ENCODE measurements at regions of chr5 and their contacts with region 1.

Region 1: GRCh38 chr5:149960272-149961185 is at the start of gene SLC26A2:
- DNase-seq: peak; percentile 93
- H3K4me3 ChIP-seq: peak within 1 kb of the TSS; percentile 75
- H3K27ac ChIP-seq: peak within 1 kb of the TSS; percentile 90
- H3K27me3 ChIP-seq: no peaks in the 10 kb centered on the region
- CTCF ChIP-seq: no peak
- polyA plus RNA-seq, gene SLC26A2: 6.6 and 9.7 TPM in 2 replicates

Region 2: DNA sequence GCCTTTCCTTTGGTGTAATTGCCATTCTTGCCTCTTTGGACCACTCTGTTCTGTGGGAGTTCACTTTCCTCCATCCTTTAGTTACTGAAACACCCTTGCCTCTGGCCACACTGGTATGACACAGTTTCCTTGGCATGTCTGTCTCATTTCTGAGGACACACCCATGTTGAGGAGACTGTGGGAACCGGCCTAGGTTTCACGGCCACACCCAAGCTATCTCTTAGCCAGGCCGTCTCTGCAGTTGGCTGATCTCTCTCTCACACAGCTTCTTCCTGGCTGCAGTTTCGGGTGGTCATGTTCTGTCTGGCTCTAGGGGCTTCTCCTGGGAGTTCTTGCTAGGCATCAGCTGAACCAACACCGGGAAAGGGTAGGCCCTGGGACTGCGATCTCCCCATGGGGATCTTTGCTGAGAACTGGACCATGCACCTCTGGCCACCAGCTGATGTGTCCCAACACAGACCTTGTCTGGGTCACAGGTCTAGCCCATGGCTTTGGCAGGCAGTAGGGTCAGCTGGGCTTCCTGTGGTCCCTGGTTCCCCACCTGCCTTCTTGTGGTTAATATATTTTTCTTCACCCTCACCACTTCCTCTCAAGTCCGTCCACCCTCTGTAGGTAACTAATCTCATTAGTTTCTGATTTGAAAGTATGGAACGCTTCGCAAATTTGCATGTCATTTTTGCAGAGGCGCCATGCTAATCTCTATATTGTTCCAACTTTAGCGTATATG is 354.4 kb before region 1 on chr5:
- CTCF ChIA-PET with region 1: no interaction called
- POLR2A ChIA-PET with region 1: interaction called, 13 read pairs
- DNase-seq: no peak
- H3K4me3 ChIP-seq: no peak overlapping the region
- H3K27ac ChIP-seq: no peak overlapping the region
- H3K27me3 ChIP-seq: peaks cover under 1% of the 10 kb centered on the region
- CTCF ChIP-seq: no peak

Region 3: DNA sequence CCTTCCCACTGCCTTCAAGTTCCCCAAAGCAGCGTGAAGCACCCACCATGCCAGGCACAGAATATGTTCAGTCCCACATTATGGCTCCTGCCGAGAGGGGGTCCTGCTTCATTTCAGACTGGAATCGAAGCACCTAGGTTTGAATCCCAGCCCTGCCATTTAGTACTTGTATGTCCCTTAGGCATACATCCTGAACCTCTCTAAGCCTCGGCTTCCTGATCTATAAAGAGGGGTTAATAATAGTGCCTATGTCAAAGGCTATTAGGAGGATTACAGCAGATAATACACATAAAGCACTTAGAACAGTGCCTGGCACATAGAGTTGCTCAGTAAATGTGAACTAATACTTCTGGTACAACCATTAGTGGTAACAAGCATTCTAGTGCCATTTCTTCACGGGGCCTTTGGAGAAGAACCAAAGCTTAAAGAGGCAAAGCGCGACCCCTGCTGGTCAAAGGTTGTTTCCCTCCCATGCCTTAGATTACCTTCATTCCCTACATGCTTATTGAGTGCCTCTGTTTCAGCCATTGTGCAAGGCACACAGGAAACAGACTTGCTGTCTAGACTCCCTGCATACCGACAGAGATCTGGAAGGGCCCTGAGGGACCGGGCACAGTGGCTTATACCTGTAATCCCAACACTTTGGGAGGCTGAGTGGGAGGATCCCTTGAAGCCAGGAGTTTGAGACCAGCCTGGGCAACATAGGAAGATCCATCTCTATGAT is 132.2 kb before region 1 on chr5:
- CTCF ChIA-PET with region 1: interaction called, 367 read pairs
- POLR2A ChIA-PET with region 1: interaction called, 3 read pairs
- DNase-seq: peak; percentile 85
- H3K4me3 ChIP-seq: no peak overlapping the region
- H3K27ac ChIP-seq: no peak overlapping the region
- H3K27me3 ChIP-seq: no peaks in the 10 kb centered on the region
- CTCF ChIP-seq: peak; percentile 89

Region 4: GRCh38 chr5:149932445-149933350 is 27.8 kb before region 1 on chr5:
- CTCF ChIA-PET with region 1: interaction called, 11 read pairs
- POLR2A ChIA-PET with region 1: no interaction called
- DNase-seq: no peak
- H3K4me3 ChIP-seq: no peak overlapping the region
- H3K27ac ChIP-seq: no peak overlapping the region
- H3K27me3 ChIP-seq: peaks cover 3% of the 10 kb centered on the region
- CTCF ChIP-seq: peak; percentile 45

Region 5: DNA sequence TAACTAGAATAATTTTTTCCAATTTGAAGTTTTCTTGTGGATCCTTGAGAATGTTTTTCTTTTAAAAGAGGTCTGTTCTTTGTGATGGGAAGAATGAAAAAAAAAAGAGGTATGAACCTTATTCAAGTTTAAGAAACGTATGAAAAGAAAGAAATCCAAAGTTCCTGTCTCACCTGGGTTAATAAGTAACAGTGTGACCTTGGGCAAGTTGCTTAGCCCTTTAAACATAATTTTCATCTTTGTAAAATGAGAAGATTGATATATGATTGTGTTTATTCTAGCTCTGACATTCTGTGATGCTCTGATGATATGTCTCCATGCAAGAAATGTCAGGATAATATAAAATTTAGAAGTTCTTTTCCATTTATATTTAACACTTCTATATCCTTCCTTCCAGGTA is 19.4 kb after region 1 on chr5:
- CTCF ChIA-PET with region 1: interaction called, 18 read pairs
- POLR2A ChIA-PET with region 1: interaction called, 12 read pairs
- DNase-seq: no peak
- H3K4me3 ChIP-seq: no peak overlapping the region
- H3K27ac ChIP-seq: no peak overlapping the region
- H3K27me3 ChIP-seq: no peaks in the 10 kb centered on the region
- CTCF ChIP-seq: no peak

Region 6: DNA sequence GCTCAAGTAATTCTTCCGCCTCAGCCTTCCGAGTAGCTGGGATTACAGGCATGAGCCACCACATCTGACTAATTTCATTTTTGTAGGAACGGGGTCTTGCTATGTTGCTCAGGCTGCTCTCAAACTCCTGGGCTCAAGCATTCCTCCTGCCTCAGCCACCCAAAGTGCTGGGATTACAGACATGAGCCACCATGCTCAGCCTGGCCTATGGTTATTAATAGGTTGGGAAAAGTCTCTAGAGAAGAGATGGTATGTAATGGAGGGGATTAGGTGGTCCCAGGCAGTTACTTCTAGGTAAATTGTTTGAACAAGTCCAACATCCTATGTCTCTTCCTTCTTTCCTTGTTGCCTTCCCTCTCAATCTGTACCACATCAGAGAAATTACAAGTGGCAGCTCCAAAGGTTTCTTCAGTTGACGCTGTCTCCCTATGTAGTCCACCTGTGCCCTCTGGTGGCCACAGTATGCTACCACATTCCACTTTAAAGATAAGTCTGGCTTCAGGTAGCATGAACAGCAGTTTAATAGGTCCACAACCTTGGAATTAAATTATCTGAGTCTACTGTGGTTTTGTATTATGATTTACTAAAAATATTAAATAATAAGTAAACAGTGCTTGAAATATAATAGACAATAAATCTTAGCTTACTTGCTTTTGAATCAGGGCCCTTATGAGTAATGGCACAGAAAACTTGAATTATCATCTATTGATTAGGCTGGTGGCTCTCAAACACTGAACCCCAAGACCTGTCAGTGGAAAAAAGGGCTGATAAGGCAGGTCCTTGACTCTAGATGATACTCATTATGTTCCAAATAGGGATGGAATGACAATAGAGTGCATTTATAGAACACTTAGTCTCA is 30.2 kb after region 1 on chr5:
- CTCF ChIA-PET with region 1: interaction called, 28 read pairs
- POLR2A ChIA-PET with region 1: no interaction called
- DNase-seq: peak; percentile 56
- H3K4me3 ChIP-seq: no peak overlapping the region
- H3K27ac ChIP-seq: no peak overlapping the region
- H3K27me3 ChIP-seq: no peaks in the 10 kb centered on the region
- CTCF ChIP-seq: peak; percentile 98

Region 7: DNA sequence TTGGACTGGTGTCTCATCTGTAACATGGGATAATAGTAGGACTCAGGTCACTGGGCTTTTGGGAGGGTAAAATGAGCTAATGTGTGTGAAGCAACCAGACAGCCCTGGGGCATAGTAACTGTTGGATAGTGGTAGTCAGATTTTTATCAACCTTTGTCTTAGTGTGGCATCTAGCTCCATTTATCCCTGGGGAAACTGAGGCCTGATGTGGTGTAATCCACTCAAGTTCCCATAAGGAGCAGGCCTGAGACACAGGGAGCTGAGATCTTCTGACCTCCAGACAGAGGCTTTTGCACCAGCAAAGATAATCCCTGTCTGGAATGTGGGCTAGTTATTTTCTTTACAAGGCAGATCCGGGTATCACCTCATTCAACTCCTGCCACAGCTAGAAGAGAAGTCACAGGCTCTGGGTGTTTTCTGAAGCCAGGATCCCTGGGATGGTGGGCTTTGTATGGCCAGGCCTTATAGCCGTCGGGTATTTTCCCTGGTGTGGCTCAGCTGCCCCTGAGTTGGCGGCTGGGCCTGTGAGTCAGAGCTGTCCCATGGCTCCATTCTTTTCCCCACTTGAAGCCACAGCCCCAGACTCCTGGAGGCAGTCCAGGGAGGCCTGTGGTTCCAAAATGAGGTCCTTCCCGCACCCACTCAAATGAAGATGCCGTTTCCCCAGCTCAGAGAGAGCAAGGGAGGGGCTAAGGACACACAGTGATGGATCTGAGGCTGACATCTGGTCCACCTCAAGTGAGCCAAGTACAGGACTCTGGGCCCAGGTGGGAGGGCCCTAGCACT is 151.9 kb after region 1 on chr5:
- CTCF ChIA-PET with region 1: no interaction called
- POLR2A ChIA-PET with region 1: no interaction called
- DNase-seq: peak; percentile 32
- H3K4me3 ChIP-seq: no peak overlapping the region
- H3K27ac ChIP-seq: peak overlapping the region; percentile 78
- H3K27me3 ChIP-seq: no peaks in the 10 kb centered on the region
- CTCF ChIP-seq: no peak